ENCODE measurements at regions of chr9 and their contacts with region 1.

Region 1: DNA sequence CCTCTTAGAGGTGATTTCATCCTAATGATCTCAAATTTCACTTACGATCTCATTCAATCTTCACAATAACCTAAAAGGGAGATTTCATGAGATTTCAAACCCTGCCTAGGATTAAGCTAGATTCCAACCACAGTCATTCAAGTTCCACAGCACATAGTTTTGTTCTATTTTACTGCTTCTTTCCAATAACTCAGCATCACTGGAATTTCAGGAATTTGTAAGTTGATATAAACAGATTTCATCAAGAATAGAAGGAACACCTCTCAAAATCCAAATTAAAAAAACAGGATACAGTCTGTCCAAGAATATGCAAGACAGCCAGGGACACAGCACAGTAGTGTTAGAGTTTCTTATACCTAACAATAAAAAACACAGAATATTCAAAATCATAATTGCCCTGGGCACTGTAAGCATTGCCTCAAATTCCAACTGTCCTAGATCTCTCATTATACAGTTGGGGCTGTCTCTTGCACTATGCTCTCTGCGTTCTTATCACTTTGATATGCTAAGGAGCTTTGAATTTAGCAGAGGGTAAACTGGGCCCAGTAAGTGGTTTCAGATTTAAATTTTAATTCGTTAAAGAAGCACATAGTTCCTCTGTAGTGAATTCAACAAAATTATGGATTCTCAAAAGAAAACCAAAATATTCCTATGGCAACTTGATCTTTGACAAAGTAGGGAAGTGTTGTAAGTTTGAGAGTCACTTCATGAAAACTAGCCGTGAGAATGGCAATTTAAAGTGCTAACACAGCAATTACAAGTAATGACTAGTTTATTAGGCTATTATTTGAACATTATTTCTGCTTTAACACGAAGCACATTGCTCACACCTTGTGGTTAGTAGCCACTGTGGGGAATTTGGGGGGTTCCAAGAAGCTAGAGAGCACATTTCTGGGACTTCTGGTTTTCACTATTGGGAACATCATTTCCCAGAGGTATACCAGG is 478.6 kb upstream of the C9orf72 start:
- DNase-seq: no peak
- ATAC-seq: no peak

Region 2: DNA sequence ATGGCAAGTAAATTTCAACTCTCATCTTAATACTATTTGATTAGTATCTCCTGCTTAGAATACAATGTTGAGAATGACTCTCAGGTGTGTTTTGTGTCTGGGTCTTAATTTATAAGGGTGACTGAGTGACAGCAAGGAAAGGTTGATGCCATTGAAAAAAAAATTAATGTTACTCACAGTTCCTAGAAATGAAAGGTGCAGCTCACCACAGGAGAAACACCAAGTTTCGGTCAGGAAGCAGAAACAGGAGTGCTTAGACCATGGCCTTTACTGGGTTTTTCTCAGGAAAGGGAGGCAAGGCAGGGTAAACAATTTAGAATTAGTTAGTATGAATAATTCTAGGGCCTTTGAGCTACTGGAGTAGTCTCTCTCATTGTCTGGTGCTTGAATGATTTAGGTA is 319.3 kb before region 1 on chr9:
- intact Hi-C with region 1: loop called in 1 of 2 experiments (anchors 10 kb)
- DNase-seq: no peak
- ATAC-seq: no peak

Region 3: DNA sequence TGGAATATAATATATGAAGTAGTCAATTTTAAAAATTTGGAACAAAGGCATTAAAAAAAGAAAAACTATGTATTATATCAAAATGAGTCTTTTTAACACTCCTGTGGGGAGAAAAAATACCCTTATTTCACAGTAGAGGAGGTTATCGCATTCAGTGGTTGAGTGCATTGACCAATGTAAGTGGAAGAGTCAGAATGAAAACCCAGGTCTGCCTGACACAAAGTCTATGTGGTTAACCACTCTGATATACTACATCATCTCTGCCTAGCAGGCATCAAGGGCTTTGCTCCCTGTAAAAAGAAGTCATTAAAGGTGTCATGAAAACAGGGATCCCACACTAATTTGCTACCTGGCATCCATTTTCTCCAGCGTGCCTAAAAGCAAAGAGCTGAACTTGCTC is 61.3 kb before region 1 on chr9:
- intact Hi-C with region 1: loop called in 1 of 2 experiments (anchors 10 kb)
- DNase-seq: no peak
- ATAC-seq: no peak

Measured in left colon (tissue), 2 donors.